CD8-positive, alpha-beta T cell (primary cell): ENCODE measurements at regions of chr17 and their contacts with region 1.

Region 1: DNA sequence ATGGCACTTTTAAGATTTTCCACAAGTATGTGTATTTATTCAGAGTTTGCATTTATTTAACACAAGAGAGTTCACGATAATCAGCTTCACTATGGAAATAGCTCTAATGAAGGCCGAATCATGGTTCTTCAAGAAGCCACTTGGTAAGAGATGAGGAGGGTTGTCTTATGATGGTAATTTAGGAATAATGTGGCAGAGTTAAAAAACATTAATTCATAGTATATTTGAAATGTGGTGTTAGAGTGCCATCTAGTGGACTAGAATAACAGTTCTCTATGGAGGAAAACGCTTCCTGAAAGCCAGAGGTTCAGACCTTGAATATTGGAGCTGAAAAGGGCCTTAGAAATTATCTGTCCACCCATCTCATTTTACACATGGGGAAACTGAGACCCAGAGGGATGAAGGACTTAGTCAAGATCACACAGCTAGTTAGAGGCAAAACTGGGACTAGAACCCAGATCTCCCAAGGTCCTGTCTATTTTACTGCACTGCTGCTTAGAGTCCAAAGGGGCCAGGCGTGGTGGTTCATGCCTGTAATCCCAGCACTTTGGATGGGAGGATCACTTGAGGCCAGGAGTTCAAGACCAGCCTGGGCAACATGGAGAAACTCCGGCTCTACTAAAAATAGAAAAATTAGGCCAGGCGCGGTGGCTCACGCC is 33.8 kb upstream of the KPNB1 start:
- DNase-seq: peak in 2 of 9 experiments; percentile 62 to 73
- ATAC-seq: peak; percentile 44
- H3K4me3 ChIP-seq: no peak overlapping the region
- H3K4me3 Mint-ChIP-seq: no peak overlapping the region
- H3K27ac ChIP-seq: no peak overlapping the region
- H3K27ac Mint-ChIP-seq: no peak overlapping the region
- H3K4me1 ChIP-seq: no peaks in the 10 kb centered on the region
- H3K4me1 Mint-ChIP-seq: peaks cover 2% of the 10 kb centered on the region
- H3K27me3 ChIP-seq: no peaks in the 10 kb centered on the region
- H3K27me3 Mint-ChIP-seq: no peaks in the 10 kb centered on the region
- CTCF ChIP-seq: peak; percentile 84

Region 2: DNA sequence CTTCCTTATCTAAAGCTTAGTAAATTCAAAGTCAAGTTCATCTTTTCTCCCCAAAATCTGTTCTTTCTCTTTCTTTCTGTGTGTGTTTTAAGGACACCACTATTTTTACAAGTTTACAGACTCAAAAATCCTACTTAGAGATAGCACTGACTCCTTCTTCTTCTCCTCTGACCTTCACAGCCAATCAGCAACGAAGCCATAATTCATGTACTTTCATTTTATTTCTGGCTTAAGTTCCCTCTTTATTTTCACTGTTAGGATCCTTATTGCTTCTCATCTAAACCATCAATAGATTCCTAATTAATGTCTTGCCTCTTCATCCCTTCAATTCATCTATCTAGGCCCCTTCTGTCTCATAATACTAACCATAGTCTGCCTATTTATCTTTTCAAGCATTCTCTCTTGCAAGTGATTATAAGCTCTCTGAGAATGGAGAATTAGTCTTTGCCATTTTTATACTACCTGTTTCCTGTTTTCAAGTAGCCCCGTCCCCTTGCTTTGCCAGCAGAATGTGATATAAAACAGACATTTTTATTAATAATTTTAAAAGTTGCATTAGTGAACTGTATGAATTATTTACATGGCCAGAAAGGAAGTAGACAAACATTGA is 453.8 kb before region 1 on chr17:
- CTCF ChIA-PET with region 1: no interaction called
- POLR2A ChIA-PET with region 1: no interaction called
- intact Hi-C with region 1: loop called in 1 of 2 experiments (anchors 10 kb)
- DNase-seq: no peak
- ATAC-seq: no peak
- H3K4me3 ChIP-seq: no peak overlapping the region
- H3K4me3 Mint-ChIP-seq: peak overlapping the region; percentile 30
- H3K27ac ChIP-seq: no peak overlapping the region
- H3K27ac Mint-ChIP-seq: peak overlapping the region; percentile 66
- H3K4me1 ChIP-seq: no peaks in the 10 kb centered on the region
- H3K4me1 Mint-ChIP-seq: peaks cover 12% of the 10 kb centered on the region
- H3K27me3 ChIP-seq: no peaks in the 10 kb centered on the region
- H3K27me3 Mint-ChIP-seq: no peaks in the 10 kb centered on the region
- CTCF ChIP-seq: no peak

Region 3: GRCh38 chr17:47315451-47316266 is 300.2 kb before region 1 on chr17:
- CTCF ChIA-PET with region 1: no interaction called
- POLR2A ChIA-PET with region 1: no interaction called
- intact Hi-C with region 1: loop called in 1 of 2 experiments (anchors 5 kb)
- DNase-seq: peak in 3 of 9 experiments; percentile 37 to 74 (median 64)
- ATAC-seq: peak; percentile 93
- H3K4me3 ChIP-seq: no peak overlapping the region
- H3K4me3 Mint-ChIP-seq: no peak overlapping the region
- H3K27ac ChIP-seq: no peak overlapping the region
- H3K27ac Mint-ChIP-seq: no peak overlapping the region
- H3K4me1 ChIP-seq: no peaks in the 10 kb centered on the region
- H3K4me1 Mint-ChIP-seq: no peaks in the 10 kb centered on the region
- H3K27me3 ChIP-seq: no peaks in the 10 kb centered on the region
- H3K27me3 Mint-ChIP-seq: no peaks in the 10 kb centered on the region
- CTCF ChIP-seq: peak; percentile 79

Region 4: DNA sequence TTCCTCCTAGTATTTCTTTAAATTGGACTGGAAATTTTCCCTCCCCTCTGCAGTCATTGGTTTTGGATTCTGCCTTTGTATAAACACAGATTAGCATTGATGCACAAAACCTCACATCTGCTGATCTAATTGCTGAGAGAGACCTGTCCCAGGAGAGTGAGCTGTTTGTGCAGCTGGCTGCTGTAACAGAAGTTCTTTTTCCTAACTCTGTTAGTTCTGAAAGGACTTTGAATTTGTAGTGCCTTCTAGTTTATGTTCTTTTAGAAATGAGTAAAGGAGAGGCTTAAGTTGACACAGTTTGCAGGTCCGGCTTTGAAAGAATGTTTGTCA is 11.3 kb before region 1 on chr17:
- CTCF ChIA-PET with region 1: interaction called, 18 read pairs
- POLR2A ChIA-PET with region 1: no interaction called
- intact Hi-C with region 1: no loop called
- DNase-seq: no peak
- ATAC-seq: no peak
- H3K4me3 ChIP-seq: no peak overlapping the region
- H3K4me3 Mint-ChIP-seq: no peak overlapping the region
- H3K27ac ChIP-seq: no peak overlapping the region
- H3K27ac Mint-ChIP-seq: no peak overlapping the region
- H3K4me1 ChIP-seq: no peaks in the 10 kb centered on the region
- H3K4me1 Mint-ChIP-seq: no peaks in the 10 kb centered on the region
- H3K27me3 ChIP-seq: no peaks in the 10 kb centered on the region
- H3K27me3 Mint-ChIP-seq: no peaks in the 10 kb centered on the region
- CTCF ChIP-seq: no peak

Region 5: DNA sequence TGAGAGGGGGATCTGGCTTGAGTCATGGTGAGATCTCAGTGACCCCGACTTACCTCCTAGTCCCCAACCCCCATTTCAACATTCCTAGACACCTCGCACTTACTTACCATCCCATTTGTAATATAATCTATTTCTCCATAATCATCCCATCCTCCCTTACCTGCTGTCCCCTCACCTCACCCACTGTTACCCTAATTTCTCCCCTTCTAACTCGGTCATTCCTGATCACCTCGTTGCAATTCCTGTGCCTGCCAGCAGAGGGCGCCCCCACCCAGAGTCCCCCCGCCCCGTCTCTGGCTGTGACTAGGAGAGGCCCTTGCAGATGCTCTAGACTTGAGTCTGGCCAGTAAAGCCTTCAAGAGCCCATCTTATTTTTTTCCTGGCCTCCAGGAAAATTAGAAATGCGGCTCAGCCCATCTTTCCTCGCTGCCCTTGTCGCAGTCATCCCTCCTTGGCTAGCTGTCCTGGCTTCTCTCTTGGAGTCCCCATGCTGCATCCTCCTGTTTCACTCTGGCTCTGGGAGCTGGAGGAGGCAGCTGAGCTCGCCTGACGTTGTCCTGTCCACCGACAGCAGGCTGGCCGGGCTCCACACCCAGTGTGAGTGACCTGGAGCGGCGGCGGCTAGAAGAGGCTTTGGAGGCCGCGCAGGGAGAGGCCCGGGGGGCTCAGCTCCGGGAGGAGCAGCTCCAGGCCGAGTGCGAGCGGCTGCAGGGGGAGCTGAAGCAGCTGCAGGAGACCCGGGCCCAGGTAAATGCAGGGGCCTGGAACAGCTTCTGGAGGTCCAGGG is 83.0 kb after region 1 on chr17:
- CTCF ChIA-PET with region 1: no interaction called
- POLR2A ChIA-PET with region 1: no interaction called
- intact Hi-C with region 1: no loop called
- DNase-seq: peak; percentile 69 to 91 (median 81)
- ATAC-seq: peak; percentile 49
- H3K4me3 ChIP-seq: no peak overlapping the region
- H3K4me3 Mint-ChIP-seq: no peak overlapping the region
- H3K27ac ChIP-seq: peak overlapping the region in 1 of 2 experiments; percentile 4
- H3K27ac Mint-ChIP-seq: no peak overlapping the region
- H3K4me1 ChIP-seq: peaks cover 38% of the 10 kb centered on the region
- H3K4me1 Mint-ChIP-seq: peaks cover 43% of the 10 kb centered on the region
- H3K27me3 ChIP-seq: no peaks in the 10 kb centered on the region
- H3K27me3 Mint-ChIP-seq: no peaks in the 10 kb centered on the region
- CTCF ChIP-seq: peak; percentile 96